ENCODE measurements at regions of chr7 and their contacts with region 1.

Region 1: DNA sequence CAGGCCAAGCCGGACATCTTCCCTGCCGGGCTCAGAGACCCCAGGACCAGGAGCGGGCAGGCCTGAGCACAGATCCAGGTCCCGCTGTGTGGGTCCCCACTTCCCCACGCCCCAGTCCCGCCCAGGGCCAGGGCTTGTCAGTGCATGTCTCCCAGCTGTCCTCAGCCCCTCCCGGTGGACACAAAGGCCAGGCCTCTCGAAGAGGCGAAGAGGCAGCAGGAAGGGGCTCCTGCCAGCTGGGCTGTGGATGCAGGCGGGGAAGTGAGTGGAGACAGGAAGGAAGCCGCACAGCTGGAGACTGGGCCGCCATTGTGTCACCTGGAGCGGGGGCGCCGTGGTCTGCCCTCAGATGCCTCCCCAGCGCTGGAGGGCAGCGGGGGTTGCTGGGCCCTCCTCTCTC is 4.8 kb downstream of the GRIFIN start:
- DNase-seq: peak; percentile 64
- H3K4me3 ChIP-seq: no peak overlapping the region
- H3K27ac ChIP-seq: no peak overlapping the region
- H3K4me1 ChIP-seq: peaks cover 0 to 5% of the 10 kb centered on the region in 2 experiments; a peak in 1 of 4 replicates
- H3K27me3 ChIP-seq: no peaks in the 10 kb centered on the region
- CTCF ChIP-seq: no peak
- EP300 ChIP-seq: no peak
- RAD21 ChIP-seq: no peak

Region 2: DNA sequence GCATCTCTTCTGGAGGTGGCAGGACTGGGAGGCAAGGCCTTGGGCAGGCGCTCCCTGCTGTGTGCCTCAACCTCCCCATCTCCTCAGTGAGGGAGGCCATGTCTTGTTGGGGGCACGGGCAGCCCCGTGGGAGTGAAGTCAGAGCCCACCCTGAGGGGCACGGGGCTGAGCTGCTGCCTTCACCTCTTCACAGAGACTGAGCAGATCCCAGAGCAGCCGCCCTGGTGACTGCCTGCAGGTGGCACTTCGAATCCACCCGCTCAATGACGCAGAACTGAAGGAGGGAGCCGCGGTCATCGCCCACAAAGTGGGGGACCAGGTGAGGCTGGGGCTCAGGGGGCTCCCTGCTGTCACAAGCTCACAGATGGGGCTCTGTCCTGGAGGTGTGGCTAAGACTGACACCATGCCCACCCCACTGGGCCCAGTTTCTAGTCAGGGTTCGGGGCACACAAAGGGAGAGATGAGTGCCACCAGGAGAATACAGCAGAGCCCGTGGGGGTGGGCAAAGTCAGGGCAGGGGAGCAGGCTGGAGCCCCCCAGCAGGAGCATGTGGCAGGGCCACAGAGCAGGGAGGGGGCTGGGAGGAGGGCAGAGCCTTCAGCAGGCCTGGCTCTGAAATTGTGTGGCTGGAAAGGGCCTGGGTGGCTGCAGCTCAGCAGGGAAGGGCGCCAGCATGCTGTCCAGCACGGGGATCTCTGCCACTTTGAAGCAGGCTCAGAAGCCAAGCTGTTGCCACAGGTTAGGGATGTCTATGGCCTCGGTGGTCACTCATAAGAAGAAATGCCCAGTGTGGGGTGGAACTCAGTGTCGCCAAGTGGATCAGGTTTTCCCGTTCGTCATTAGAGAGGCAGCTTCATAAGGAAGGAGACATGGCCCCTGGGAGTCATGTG is 86.8 kb before region 1 on chr7:
- CTCF ChIA-PET with region 1: interaction called, 35 read pairs
- POLR2A ChIA-PET with region 1: no interaction called
- DNase-seq: peak; percentile 66
- H3K4me3 ChIP-seq: no peak overlapping the region
- H3K27ac ChIP-seq: peak overlapping the region in 1 of 2 experiments; percentile 71; a peak in 2 of 4 replicates
- H3K4me1 ChIP-seq: peaks cover 0 to 20% of the 10 kb centered on the region in 2 experiments; a peak in 1 of 4 replicates
- H3K27me3 ChIP-seq: no peaks in the 10 kb centered on the region
- CTCF ChIP-seq: no peak
- EP300 ChIP-seq: no peak
- RAD21 ChIP-seq: peak; percentile 62

Region 3: DNA sequence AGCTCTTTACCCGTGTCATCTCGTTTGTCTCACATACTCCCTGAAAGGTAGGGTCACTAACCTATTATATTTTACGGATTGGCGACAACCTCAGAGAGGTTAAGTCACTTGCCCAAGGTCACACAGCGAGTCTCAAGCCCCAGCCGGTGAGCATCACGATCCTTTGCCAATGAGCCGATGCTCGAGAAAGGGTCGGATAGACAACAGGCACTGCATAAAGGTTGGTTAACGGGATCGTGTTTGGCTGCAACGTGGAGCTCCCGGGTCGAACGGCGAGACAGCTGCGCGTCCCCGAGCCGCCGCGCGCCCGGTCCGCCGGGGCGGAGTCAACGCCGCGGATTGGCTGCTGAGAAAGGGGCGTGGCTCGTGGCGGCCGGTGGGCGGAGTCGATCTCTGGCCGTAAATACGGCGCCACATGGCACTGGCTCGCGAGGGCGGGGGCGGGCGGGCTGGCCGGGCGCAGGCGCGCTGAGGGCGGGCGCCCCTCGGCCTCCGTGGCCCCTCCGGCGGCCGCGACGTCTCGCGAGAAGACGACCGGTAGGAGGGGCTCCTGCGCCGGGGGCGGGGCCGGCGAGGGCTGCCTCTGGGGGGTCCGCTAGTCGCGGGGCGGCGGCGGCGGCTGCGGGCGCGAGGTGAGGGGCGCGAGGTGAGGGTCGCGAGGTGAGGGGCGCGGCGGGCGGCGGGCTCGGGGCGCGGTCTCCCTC is 68.2 kb before region 1 on chr7 and contains the start of gene CHST12:
- CTCF ChIA-PET with region 1: interaction called, 10 read pairs
- POLR2A ChIA-PET with region 1: no interaction called
- DNase-seq: peak; percentile 100
- H3K4me3 ChIP-seq: peak within 1 kb of the TSS; percentile 66 to 76
- H3K27ac ChIP-seq: peak within 1 kb of the TSS; percentile 26 to 65; a peak in 2 of 4 replicates
- H3K4me1 ChIP-seq: peaks cover 10 to 30% of the 10 kb centered on the region in 2 experiments; a peak in 2 of 4 replicates
- H3K27me3 ChIP-seq: no peaks in the 10 kb centered on the region
- CTCF ChIP-seq: no peak
- EP300 ChIP-seq: no peak; a peak in 1 of 4 replicates
- RAD21 ChIP-seq: no peak
- polyA plus RNA-seq, gene CHST12: 26.7 and 32.7 TPM in 2 replicates

Region 4: GRCh38 chr7:2460188-2460587 is 11.2 kb before region 1 on chr7:
- CTCF ChIA-PET with region 1: interaction called, 270 read pairs
- POLR2A ChIA-PET with region 1: no interaction called
- DNase-seq: no peak
- H3K4me3 ChIP-seq: no peak overlapping the region
- H3K27ac ChIP-seq: no peak overlapping the region
- H3K4me1 ChIP-seq: no peaks in the 10 kb centered on the region
- H3K27me3 ChIP-seq: no peaks in the 10 kb centered on the region
- CTCF ChIP-seq: no peak
- EP300 ChIP-seq: no peak
- RAD21 ChIP-seq: no peak

Region 5: DNA sequence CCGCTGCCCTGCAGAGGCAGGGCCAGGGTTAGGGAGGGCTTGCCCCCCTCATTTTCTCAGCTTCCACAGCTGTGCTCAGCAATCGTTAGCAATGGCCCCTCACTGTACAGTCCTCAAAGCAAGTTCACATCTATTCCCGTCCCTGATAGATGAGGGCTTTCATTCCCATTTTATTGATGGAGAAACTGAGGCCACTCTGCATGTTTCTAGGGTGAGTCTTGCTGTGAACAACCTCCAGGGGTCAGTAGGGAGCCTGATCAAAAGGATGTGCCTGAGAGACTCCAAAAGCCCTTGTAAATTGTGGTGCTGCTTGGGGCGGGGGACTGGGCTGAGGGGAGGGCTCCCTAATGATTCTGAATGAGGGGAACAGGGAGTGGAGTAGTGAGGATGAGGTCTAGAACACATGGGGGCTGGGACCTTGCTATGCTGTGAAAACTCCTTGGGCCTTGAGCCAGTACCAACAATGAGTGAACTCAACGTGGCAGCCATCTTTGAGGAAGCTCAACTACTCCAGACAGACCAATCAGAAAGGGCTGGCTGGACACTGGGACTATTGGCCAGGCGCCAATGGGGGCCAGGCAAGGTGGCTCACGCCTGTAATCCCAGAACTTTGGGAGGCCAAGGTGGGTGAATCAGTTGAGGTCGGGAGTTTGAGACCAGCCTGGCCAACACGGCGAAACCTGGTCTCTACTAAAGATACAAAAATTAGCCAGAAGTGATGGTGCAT is 11.5 kb after region 1 on chr7:
- CTCF ChIA-PET with region 1: interaction called, 48 read pairs
- POLR2A ChIA-PET with region 1: no interaction called
- DNase-seq: no peak
- H3K4me3 ChIP-seq: no peak overlapping the region
- H3K27ac ChIP-seq: no peak overlapping the region
- H3K4me1 ChIP-seq: peaks cover 0 to 8% of the 10 kb centered on the region in 2 experiments; a peak in 1 of 4 replicates
- H3K27me3 ChIP-seq: no peaks in the 10 kb centered on the region
- CTCF ChIP-seq: peak; percentile 31
- EP300 ChIP-seq: no peak
- RAD21 ChIP-seq: no peak

Region 6: GRCh38 chr7:2495418-2496299 is 24.3 kb after region 1 on chr7:
- CTCF ChIA-PET with region 1: interaction called, 21 read pairs
- POLR2A ChIA-PET with region 1: interaction called, 3 read pairs
- DNase-seq: peak; percentile 93
- H3K4me3 ChIP-seq: no peak overlapping the region
- H3K27ac ChIP-seq: peak overlapping the region in 1 of 2 experiments; percentile 76; a peak in 2 of 4 replicates
- H3K4me1 ChIP-seq: peaks cover 10 to 28% of the 10 kb centered on the region in 2 experiments; a peak in 2 of 4 replicates
- H3K27me3 ChIP-seq: no peaks in the 10 kb centered on the region
- CTCF ChIP-seq: no peak
- EP300 ChIP-seq: peak in 1 of 2 experiments; percentile 63; a peak in 2 of 4 replicates
- RAD21 ChIP-seq: peak; percentile 38; the same call in 1 of the 2 replicates

Region 7: GRCh38 chr7:2503056-2503941 is 31.9 kb after region 1 on chr7:
- CTCF ChIA-PET with region 1: interaction called, 21 read pairs
- POLR2A ChIA-PET with region 1: no interaction called
- DNase-seq: no peak
- H3K4me3 ChIP-seq: no peak overlapping the region
- H3K27ac ChIP-seq: no peak overlapping the region
- H3K4me1 ChIP-seq: peaks cover under 1 to 5% of the 10 kb centered on the region in 2 experiments; a peak in 2 of 4 replicates
- H3K27me3 ChIP-seq: no peaks in the 10 kb centered on the region
- CTCF ChIP-seq: no peak
- EP300 ChIP-seq: no peak
- RAD21 ChIP-seq: no peak

Region 8: DNA sequence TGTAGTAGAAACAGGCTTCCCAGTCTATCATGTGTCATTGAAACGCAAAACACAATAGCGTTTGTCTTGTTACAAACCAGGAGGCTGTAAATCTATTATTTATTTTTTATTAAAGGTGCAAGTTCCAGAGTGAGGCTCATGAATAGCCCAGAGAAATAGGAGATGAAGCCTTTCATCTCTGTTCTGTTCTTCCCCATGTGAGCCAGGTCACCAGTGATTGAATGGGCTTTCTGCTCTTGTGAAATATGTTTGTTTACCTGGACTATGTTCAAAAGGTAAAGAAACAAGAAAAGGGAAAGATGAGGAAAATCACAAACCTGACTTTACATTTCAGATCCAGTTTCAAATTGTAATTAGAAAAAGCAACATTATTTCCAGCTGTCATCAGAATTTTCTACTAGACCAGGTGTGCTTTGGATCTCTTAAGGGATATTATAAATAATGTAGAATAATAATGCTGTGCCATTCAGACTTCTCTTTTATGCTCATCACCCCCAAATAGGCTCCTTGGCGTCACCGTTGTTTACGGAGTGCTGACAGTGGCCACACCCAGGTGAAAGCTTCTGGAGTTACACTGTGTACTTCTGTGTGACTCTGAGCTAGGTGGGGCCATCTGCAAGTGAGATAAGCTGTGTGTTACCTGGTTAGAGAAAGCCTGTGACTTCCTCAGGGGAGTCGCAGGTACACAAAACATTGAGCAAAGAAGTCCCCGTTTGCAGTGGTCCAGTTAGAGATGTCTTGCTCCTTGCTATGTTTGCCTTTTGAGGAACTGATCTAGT is 1104.5 kb after region 1 on chr7:
- CTCF ChIA-PET with region 1: no interaction called
- POLR2A ChIA-PET with region 1: no interaction called
- DNase-seq: no peak
- H3K4me3 ChIP-seq: no peak overlapping the region
- H3K27ac ChIP-seq: no peak overlapping the region
- H3K4me1 ChIP-seq: no peaks in the 10 kb centered on the region
- H3K27me3 ChIP-seq: no peaks in the 10 kb centered on the region
- CTCF ChIP-seq: no peak
- EP300 ChIP-seq: no peak
- RAD21 ChIP-seq: no peak

Measured in SK-N-SH (cell line).